OCI-LY7 (cell line): ENCODE measurements at regions of chr10 and their contacts with region 1.

Region 1: GRCh38 chr10:132492323-132493025 is 45.1 kb upstream of the INPP5A start:
- DNase-seq: no peak
- H3K4me3 ChIP-seq: no peak overlapping the region
- H3K27ac ChIP-seq: no peak overlapping the region
- H3K4me1 ChIP-seq: no peaks in the 10 kb centered on the region
- CTCF ChIP-seq: no peak

Region 2: DNA sequence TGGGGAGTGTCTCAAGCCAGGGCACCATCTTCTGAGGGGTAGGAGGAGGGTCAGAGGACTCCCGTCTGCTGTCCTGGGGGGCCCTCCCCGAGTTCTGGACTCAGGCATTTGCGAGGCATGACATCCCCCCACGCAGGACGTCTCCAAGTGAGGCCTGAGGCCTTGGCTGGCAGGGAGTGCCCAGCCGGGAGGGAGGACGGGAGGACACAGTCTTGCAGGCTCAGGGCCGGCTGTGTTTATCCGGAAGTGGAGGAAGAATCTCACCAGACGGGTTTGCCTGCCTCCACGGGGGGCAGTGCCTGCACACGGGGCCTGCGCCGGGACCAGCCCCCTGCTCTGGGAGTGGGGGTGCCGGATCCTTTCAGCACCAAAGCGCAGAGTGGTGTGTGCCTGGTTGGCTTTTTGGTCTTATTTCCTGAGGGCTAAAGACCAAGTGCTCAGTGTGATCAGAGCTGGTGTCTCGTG is 84.6 kb before region 1 on chr10:
- CTCF ChIA-PET with region 1: no interaction called
- POLR2A ChIA-PET with region 1: no interaction called
- intact Hi-C with region 1: no loop called
- DNase-seq: peak; percentile 17
- H3K4me3 ChIP-seq: no peak overlapping the region
- H3K27ac ChIP-seq: no peak overlapping the region
- H3K4me1 ChIP-seq: peaks cover 7% of the 10 kb centered on the region
- CTCF ChIP-seq: no peak

Region 3: DNA sequence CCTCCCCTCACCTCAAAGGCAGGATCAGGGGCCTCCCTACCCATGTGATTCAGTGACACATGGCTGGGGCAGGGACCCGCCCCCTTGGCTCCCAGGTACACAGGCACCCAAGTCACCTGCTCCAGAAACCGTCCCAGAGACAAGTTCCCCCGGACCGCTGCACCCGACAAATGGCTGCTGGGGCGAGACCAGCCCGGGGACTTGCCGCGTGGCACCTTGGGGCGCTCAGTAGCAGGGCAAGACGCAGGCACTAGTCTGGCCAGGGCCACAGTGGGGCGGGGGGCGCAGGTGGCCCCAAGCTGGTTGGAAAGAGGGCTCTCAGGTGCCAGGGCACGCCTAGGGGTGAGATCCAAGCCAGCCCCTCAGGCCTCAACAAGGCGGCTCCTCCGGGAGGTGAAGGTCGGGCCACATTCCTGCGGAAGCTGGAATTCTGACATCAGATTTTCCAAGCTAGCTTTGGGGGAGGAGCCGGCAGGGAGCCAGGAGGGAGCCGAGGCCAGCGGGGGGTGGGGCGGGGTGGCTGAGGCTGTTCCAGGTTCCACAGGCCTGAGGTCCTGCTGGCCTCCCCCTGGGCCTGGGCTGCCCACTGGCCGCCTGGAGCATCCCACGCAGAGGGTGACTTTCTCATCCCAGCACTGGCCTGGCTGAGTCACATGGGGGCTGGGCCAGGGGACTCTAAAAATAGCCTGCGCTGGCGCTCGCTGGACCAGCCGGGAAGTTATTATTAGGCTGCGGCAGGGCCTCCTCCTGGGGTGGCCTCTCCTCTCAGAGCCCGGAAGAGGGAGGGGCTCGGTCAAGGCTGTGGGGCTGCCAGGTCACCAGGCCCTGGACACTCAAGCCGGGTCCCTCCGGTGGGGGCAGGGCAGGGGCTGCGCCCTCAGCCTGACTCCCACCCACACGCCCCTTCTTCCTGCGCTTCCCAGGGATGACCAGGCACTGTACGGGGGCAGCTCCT is 24.6 kb after region 1 on chr10:
- CTCF ChIA-PET with region 1: no interaction called
- POLR2A ChIA-PET with region 1: no interaction called
- intact Hi-C with region 1: no loop called
- DNase-seq: no peak
- H3K4me3 ChIP-seq: no peak overlapping the region
- H3K27ac ChIP-seq: no peak overlapping the region
- H3K4me1 ChIP-seq: peaks cover 3% of the 10 kb centered on the region
- CTCF ChIP-seq: no peak

Region 4: DNA sequence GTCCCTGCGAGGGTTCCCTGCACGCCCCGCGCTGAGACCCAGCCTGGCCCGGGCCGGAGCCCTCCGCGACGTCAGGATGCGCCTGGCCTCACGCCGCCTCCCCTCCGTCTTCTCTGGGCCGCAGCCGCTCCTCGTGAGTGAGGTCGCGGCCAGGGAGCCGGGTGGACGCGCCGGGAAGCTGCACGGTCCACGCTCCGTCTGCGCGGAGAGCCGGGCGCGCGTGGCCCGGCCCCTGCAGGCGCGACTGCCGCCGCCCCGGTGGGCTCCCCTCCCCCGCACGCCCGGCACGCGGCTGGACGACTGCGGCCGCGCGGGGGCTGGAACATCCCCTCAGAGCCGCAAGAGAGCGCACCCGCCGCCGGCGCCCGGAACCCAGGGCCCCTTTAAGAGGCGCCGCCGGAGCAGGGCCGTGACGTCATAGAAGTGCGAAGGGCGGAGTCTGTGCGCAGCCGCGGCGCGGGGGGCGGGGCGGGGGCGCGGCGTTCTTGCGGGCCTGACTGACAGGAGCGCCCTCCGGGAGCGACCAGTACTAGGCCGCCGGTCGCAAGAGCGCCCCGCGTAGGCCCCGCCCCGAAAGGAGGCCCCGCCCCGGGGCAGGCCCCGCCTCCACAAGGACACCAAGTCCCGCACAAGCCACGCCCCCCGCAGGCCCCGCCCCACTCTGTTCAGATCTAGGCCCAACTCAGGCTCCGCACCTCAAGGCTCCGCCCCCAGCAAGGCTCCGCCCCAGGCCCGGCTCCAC is 44.7 kb after region 1 on chr10:
- CTCF ChIA-PET with region 1: no interaction called
- POLR2A ChIA-PET with region 1: no interaction called
- intact Hi-C with region 1: no loop called
- DNase-seq: peak; percentile 98
- H3K4me3 ChIP-seq: peak overlapping the region; percentile 75
- H3K27ac ChIP-seq: no peak overlapping the region
- H3K4me1 ChIP-seq: peaks cover 45% of the 10 kb centered on the region
- CTCF ChIP-seq: peak; percentile 47

Region 5: DNA sequence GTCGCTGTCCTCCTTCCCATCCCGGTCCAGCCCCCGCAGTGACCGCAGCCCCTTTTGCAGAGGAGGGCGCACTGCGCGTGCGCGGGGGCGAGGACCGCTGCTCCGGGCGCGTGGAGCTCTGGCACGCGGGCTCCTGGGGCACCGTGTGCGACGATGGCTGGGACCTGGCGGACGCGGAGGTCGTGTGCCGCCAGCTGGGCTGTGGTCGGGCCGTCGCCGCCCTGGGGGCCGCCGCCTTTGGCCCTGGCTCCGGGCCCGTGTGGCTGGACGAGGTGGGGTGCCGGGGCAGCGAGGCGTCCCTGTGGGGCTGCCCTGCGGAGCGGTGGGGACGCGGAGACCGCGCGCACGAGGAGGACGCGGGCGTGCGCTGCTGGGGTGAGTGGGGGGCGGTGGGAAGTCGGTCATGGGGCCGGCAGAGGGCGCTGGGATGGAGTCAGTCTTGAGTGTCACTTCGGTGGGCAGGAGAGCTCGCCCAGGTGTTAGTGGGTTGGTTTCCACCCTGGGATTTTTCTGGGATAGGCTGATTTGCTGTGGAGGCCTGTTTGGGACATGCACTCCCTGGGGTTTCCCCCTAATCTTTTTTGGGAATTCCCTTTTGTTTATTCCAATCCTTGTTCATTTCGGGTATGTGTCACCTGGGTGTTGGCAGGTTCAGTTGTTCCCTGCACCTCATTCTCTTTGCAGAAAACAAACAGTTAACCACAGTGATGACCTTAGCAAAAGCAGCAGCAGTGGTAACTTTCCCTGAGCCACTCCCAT is 972.9 kb after region 1 on chr10:
- CTCF ChIA-PET with region 1: no interaction called
- POLR2A ChIA-PET with region 1: no interaction called
- intact Hi-C with region 1: loop called (anchors 10 kb)
- DNase-seq: no peak
- H3K4me3 ChIP-seq: no peak overlapping the region
- H3K27ac ChIP-seq: no peak overlapping the region
- H3K4me1 ChIP-seq: no peaks in the 10 kb centered on the region
- CTCF ChIP-seq: no peak